Activated naive CD4-positive, alpha-beta T cell treated with anti-CD3 and anti-CD28 coated beads, Interleukin-2, amount 10 ng/mL, durations not matched to agents 7 days and 5 days (primary cell): ENCODE measurements at regions of chr19 and their contacts with region 1.

Region 1: DNA sequence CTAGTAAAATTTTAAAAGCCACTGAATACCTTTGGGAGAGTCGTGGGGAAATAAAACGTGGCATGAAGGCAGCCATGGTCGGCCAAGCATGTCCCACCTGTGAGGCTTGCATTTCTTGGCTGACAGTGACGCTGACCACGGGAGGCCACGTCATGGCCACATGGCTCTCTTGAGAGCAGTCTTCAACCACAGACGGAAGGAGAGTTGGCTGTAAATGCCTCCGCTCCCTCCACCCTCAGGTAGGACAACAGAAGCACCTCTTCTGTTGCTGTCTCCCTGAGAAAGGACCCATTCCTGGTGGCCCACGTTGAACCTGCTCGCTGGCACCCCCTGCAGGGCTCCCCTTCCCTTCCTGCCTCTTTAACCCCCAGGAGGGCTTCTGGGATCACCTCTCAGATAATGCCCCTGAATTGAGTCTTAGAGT is 10.6 kb upstream of the LRRC25 start:
- DNase-seq: peak; percentile 60
- H3K4me3 Mint-ChIP-seq: no peak overlapping the region
- H3K27ac Mint-ChIP-seq: no peak overlapping the region
- H3K4me1 Mint-ChIP-seq: peaks cover 6% of the 10 kb centered on the region
- H3K27me3 Mint-ChIP-seq: peaks cover 30% of the 10 kb centered on the region

Region 2: DNA sequence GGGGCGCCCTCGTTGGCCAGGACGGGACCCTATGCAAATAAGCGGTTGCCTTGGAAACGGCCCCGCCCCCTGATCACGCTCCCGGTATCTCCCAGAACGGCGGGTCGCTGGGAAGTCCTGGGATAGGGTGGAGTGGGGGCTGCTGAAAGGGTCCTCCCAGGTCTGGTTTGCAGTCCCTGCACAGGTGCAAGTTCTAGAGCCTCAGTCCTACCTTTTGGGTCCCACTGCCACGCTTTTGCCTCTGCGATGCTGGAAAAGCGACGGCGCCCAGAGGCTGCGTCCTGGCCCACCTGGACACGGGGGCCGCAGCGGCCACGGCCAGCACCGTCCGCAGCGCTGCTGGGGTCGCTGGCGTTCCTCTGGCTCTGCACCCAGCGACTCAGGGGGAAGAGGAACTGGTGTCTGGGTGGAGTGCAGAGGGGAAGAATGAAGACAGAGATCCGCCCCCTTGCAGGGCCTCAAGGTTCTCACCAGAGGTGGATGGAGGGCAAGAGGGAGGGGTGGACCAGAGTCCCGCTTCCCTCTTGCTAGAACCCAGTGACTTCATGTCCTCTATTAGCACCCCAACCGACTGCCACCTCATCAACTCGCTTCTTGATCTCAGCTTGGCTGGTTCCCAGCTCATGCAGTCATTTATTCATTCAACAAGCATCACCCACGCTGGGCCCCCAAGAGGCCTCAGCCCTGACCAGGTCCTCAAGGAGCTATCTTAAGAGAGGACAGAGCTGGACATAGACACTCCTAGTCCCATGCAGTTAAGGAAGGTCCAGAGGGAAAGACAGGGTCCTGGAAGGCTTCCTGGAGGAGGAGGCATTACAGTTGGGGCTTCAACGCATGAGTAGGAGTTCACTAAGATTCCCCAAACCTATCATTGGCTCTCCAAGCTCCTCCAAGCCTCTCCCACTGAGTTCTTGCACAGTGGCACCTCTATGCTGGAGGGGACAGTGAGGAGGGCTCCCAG is 10.5 kb before region 1 on chr19 and contains the start of gene LRRC25:
- CTCF ChIA-PET with region 1: interaction called, 10 read pairs
- DNase-seq: peak; percentile 42
- H3K4me3 Mint-ChIP-seq: no peak within 1 kb of the TSS
- H3K27ac Mint-ChIP-seq: no peak within 1 kb of the TSS
- H3K4me1 Mint-ChIP-seq: peaks cover 21% of the 10 kb centered on the region
- H3K27me3 Mint-ChIP-seq: peaks cover 72% of the 10 kb centered on the region